ENCODE measurements at regions of chr3 and their contacts with region 1.

Region 1: GRCh38 chr3:11803977-11804892 is 42.5 kb downstream of the TAMM41 start:
- DNase-seq: peak in 4 of 6 donors; percentile 26 to 46 (median 33)
- ATAC-seq: peak; percentile 82 to 98 (median 96)
- H3K4me3 ChIP-seq: no peak overlapping the region
- H3K27ac ChIP-seq: no peak overlapping the region
- H3K4me1 ChIP-seq: no peaks in the 10 kb centered on the region
- H3K27me3 ChIP-seq: no peaks in the 10 kb centered on the region
- CTCF ChIP-seq: peak; percentile 46 to 73 (median 63)

Region 2: DNA sequence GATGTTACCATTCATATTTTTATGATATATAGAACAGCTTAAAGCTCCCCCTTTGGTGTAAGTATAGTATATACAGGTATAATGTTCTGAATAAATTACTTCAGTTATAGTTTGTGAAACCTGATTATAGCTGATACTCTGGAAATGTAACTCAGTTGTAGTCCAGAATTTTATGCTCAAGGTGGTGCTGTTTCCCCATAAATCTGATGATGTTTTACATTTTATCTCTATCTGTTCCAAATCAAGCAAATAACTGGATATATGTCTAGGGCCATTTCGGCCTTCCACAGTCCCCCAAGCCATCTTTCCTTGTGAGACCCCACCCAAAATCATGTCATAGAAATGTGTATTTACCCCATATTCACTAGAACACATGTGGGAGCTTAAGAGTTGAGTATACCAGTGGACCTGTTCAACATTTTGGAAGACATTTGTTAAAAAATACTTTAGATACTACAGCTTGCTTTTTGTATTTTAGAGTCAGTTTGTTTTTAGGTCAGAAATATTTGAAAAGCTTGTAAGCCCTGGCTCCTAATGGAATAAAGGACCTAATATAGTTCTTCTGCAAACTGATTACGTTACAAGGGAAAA is 424.9 kb before region 1 on chr3:
- intact Hi-C with region 1: loop called in 2 of 3 experiments (anchors 10 kb)
- DNase-seq: no peak
- ATAC-seq: peak; percentile 63 to 77 (median 76)
- H3K4me3 ChIP-seq: no peak overlapping the region
- H3K27ac ChIP-seq: peak overlapping the region in 2 of 4 donors; percentile 48 to 66
- H3K4me1 ChIP-seq: peaks cover 6 to 28% (median 25%) of the 10 kb centered on the region in 3 donors
- H3K27me3 ChIP-seq: no peaks in the 10 kb centered on the region
- CTCF ChIP-seq: peak; percentile 13 to 31 (median 26)

Region 3: GRCh38 chr3:11385891-11386290 is 418.3 kb before region 1 on chr3:
- intact Hi-C with region 1: loop called in 1 of 3 experiments (anchors 10 kb)
- DNase-seq: peak in 1 of 6 donors; percentile 47
- ATAC-seq: peak in 2 of 4 donors; percentile 48 to 71
- H3K4me3 ChIP-seq: no peak overlapping the region
- H3K27ac ChIP-seq: peak overlapping the region in 2 of 4 donors; percentile 25 to 33
- H3K4me1 ChIP-seq: peaks cover 0 to 35% (median 12%) of the 10 kb centered on the region in 3 donors
- H3K27me3 ChIP-seq: no peaks in the 10 kb centered on the region
- CTCF ChIP-seq: no peak